Activated CD8-positive, alpha-beta T cell treated with anti-CD3 and anti-CD28 coated beads for 36 hours (primary cell): ENCODE measurements at regions of chr5 and their contacts with region 1.

Region 1: GRCh38 chr5:119411935-119412602 is 40.2 kb upstream of the HSD17B4 start:
- DNase-seq: peak; percentile 66
- ATAC-seq: peak; percentile 84
- H3K4me3 Mint-ChIP-seq: peak overlapping the region; percentile 78
- H3K27ac Mint-ChIP-seq: peak overlapping the region; percentile 80
- H3K4me1 Mint-ChIP-seq: peaks cover 41% of the 10 kb centered on the region
- H3K27me3 Mint-ChIP-seq: no peaks in the 10 kb centered on the region
- CTCF ChIP-seq: peak; percentile 93

Region 2: GRCh38 chr5:118987988-118988865 is 423.8 kb before region 1 on chr5 and contains the start of gene DTWD2:
- CTCF ChIA-PET with region 1: interaction called, 95 read pairs
- POLR2A ChIA-PET with region 1: interaction called, 3 read pairs
- intact Hi-C with region 1: loop called (anchors 1 kb)
- DNase-seq: peak; percentile 94
- ATAC-seq: peak; percentile 92
- H3K4me3 Mint-ChIP-seq: peak within 1 kb of the TSS; percentile 77
- H3K27ac Mint-ChIP-seq: peak within 1 kb of the TSS; percentile 80
- H3K4me1 Mint-ChIP-seq: peaks cover 27% of the 10 kb centered on the region
- H3K27me3 Mint-ChIP-seq: no peaks in the 10 kb centered on the region
- CTCF ChIP-seq: peak; percentile 99
- total RNA-seq, gene DTWD2: 5.4 to 6.7 TPM

Region 3: DNA sequence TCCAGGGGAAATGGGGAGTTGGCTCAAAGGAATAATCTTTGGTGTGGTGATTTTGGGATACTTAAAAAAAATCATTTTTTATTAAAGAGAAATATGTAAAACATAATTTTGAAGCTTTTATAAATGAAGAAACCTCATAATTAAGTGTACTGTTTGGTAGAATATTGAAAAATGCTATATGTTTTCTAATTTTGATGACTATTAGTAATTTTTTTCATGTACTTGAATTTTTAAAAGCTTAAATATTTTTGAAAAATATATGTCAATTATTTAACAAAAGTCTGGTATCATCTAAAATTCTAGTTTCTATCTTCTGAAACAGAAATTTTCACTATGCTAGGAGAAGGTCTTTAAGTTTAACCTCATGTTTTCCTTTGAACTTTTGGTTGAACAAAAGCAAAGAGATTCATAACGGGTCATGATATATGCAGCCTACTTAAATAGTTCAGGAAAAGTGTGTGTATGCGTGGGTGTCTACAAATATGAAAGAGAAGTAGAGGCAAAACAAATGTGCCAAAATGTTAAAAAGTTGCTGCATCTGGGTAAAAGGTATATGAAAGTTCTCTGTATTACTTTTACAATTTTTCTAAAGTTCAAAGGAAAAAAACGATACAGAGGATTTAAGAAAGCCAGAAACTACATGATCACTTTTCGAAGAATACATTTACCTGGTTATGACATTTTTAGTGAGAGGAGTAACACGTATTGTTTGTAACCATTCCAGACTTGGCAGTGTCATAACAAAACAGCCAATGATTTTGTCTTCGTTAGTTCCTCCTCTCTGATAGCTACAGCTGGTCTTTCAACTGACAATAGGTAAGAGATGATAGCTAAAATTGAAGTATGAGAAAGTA is 173.6 kb before region 1 on chr5:
- CTCF ChIA-PET with region 1: interaction called, 22 read pairs
- POLR2A ChIA-PET with region 1: no interaction called
- intact Hi-C with region 1: no loop called
- DNase-seq: no peak
- ATAC-seq: peak; percentile 85
- H3K4me3 Mint-ChIP-seq: peak overlapping the region; percentile 53
- H3K27ac Mint-ChIP-seq: peak overlapping the region; percentile 82
- H3K4me1 Mint-ChIP-seq: peaks cover 23% of the 10 kb centered on the region
- H3K27me3 Mint-ChIP-seq: no peaks in the 10 kb centered on the region
- CTCF ChIP-seq: no peak

Region 4: DNA sequence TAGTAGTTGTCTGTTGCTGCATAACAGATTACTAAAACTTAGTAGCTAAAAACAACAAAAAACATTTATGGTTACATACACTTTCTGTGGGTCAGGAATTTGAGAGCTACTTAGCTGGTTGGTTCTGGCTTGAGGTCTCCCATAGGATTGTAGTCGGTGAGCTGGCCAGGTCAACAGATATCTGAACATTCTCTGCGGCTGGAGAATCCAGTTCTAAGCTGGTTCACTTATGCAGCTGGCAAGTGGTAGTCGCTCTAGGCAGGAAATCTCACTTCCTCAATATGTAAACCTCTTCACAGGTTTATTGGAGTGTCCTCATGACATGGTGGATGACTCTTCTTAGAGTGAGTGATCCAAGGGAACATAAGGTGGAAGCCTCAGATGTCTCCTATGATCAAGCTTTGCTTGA is 121.9 kb before region 1 on chr5:
- CTCF ChIA-PET with region 1: interaction called, 19 read pairs
- POLR2A ChIA-PET with region 1: no interaction called
- intact Hi-C with region 1: no loop called
- DNase-seq: peak; percentile 26
- ATAC-seq: peak; percentile 59
- H3K4me3 Mint-ChIP-seq: peak overlapping the region; percentile 22
- H3K27ac Mint-ChIP-seq: peak overlapping the region; percentile 93
- H3K4me1 Mint-ChIP-seq: peaks cover 85% of the 10 kb centered on the region
- H3K27me3 Mint-ChIP-seq: no peaks in the 10 kb centered on the region
- CTCF ChIP-seq: no peak

Region 5: DNA sequence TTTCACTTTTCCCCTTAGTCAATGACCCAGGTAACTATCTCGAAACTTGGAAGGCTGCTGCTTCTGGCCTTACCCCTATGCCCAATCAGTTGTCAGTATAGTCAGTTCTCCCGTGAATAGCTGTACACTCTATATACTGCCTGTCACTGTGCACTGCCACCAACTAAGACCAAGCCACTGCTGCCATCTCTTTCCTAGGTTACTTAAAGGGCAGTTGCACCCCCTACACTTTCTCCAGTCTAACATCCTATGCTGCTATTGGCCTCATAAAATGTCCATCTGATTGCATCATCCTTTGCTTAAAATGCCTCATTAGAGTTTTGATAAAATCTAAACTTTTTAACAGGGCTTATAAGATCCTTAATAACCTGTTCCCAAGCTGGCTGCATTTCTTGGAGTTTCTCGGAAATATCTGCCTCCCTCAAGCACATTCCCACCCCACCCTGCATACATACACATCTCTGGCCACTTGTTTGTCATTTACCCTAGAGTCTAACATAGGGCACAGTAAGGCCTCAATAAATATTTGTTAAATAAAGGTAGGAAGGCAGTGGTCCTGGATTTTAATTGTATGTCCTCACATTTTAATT is 89.0 kb before region 1 on chr5:
- CTCF ChIA-PET with region 1: interaction called, 92 read pairs
- POLR2A ChIA-PET with region 1: no interaction called
- intact Hi-C with region 1: loop called (anchors 5 kb)
- DNase-seq: peak; percentile 49
- ATAC-seq: peak; percentile 64
- H3K4me3 Mint-ChIP-seq: peak overlapping the region; percentile 58
- H3K27ac Mint-ChIP-seq: peak overlapping the region; percentile 96
- H3K4me1 Mint-ChIP-seq: peaks cover 94% of the 10 kb centered on the region
- H3K27me3 Mint-ChIP-seq: no peaks in the 10 kb centered on the region
- CTCF ChIP-seq: no peak

Region 6: GRCh38 chr5:119360905-119361593 is 51.0 kb before region 1 on chr5:
- CTCF ChIA-PET with region 1: interaction called, 46 read pairs
- POLR2A ChIA-PET with region 1: interaction called, 5 read pairs
- intact Hi-C with region 1: loop called (anchors 5 kb)
- DNase-seq: no peak
- ATAC-seq: no peak
- H3K4me3 Mint-ChIP-seq: peak overlapping the region; percentile 98
- H3K27ac Mint-ChIP-seq: peak overlapping the region; percentile 97
- H3K4me1 Mint-ChIP-seq: peaks cover 72% of the 10 kb centered on the region
- H3K27me3 Mint-ChIP-seq: no peaks in the 10 kb centered on the region
- CTCF ChIP-seq: no peak

Region 7: GRCh38 chr5:119397518-119398380 is 14.3 kb before region 1 on chr5:
- CTCF ChIA-PET with region 1: interaction called, 93 read pairs
- POLR2A ChIA-PET with region 1: interaction called, 4 read pairs
- intact Hi-C with region 1: no loop called
- DNase-seq: peak; percentile 44
- ATAC-seq: peak; percentile 72
- H3K4me3 Mint-ChIP-seq: peak overlapping the region; percentile 56
- H3K27ac Mint-ChIP-seq: peak overlapping the region; percentile 98
- H3K4me1 Mint-ChIP-seq: peaks cover 80% of the 10 kb centered on the region
- H3K27me3 Mint-ChIP-seq: no peaks in the 10 kb centered on the region
- CTCF ChIP-seq: no peak